ENCODE measurements at regions of chr21 and their contacts with region 1.

Region 1: DNA sequence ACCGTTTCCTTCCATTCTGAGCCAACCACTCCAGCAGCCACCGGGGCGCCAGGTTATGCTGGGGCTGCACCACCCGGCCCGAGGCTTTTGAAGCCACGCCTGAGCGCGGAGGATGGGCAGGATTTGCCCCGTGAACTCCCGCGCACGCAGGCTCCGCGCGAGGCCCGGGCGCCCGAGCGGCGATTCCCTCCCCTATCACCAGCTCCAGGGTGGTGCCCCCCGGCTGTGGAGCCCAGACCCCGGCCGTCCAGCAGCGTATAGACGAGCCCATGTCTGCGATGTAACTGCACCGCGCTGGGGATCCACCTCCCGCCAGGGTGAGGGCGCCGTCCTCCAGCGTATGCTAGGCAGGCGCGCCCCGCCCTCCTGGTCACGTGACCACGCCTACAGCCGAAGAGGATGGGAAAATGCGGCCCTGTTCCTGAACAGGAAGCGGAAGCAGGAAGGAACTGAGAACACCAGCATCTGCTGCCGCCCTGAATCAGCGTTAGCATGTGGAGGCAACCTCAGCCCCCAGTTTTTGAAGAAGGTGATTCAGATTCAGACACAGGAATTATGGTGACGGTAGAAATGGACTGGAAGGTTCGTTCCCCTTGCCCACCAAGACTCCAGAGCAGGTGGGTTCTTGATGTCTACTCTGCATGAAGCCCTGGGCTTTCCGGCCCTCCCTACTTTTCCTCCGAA is 46.0 kb downstream of the VPS26C start:
- DNase-seq: peak; percentile 89 to 96 (median 94)
- H3K4me3 ChIP-seq: peak overlapping the region; percentile 55 to 82 (median 67)
- H3K4me3 Mint-ChIP-seq: peak overlapping the region; percentile 90 to 93
- H3K27ac ChIP-seq: peak overlapping the region; percentile 21 to 55
- H3K27ac Mint-ChIP-seq: peak overlapping the region; percentile 32 to 87 (median 78)
- H3K4me1 ChIP-seq: peaks cover 14 to 24% of the 10 kb centered on the region in 2 donors
- H3K4me1 Mint-ChIP-seq: peaks cover 23% of the 10 kb centered on the region
- H3K27me3 ChIP-seq: no peaks in the 10 kb centered on the region
- H3K27me3 Mint-ChIP-seq: peaks cover 2 to 10% (median 9%) of the 10 kb centered on the region in 3 donors
- CTCF ChIP-seq: peak; percentile 67

Region 2: GRCh38 chr21:37145635-37146111 is 75.5 kb before region 1 on chr21:
- intact Hi-C with region 1: no loop called
- DNase-seq: no peak
- H3K4me3 ChIP-seq: no peak overlapping the region
- H3K4me3 Mint-ChIP-seq: no peak overlapping the region
- H3K27ac ChIP-seq: no peak overlapping the region
- H3K27ac Mint-ChIP-seq: peak overlapping the region in 2 of 7 donors; percentile 21 to 68
- H3K4me1 ChIP-seq: no peaks in the 10 kb centered on the region
- H3K4me1 Mint-ChIP-seq: no peaks in the 10 kb centered on the region
- H3K27me3 ChIP-seq: no peaks in the 10 kb centered on the region
- H3K27me3 Mint-ChIP-seq: no peaks in the 10 kb centered on the region
- CTCF ChIP-seq: no peak

Region 3: DNA sequence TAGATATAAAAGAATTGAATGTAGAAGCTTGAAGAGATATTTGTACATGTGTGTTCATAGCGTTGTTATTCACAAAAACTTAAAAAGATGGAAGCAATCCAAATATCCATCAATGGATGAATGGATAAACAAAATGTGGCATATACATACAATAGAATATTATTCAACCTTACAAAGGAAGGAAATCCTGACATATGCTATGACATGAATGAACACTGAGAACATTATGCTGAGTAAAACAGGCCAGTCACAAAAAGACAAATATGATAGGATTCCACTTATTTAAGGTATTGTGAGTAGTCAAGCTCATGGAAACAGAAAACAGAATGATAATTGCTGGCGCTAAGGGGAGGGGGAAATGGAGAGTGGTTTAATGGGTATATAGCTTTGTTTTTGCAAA is 98.4 kb after region 1 on chr21:
- intact Hi-C with region 1: no loop called
- DNase-seq: no peak
- H3K4me3 ChIP-seq: no peak overlapping the region
- H3K4me3 Mint-ChIP-seq: no peak overlapping the region
- H3K27ac ChIP-seq: no peak overlapping the region
- H3K27ac Mint-ChIP-seq: no peak overlapping the region
- H3K4me1 ChIP-seq: no peaks in the 10 kb centered on the region
- H3K4me1 Mint-ChIP-seq: no peaks in the 10 kb centered on the region
- H3K27me3 ChIP-seq: no peaks in the 10 kb centered on the region
- H3K27me3 Mint-ChIP-seq: peaks cover 0 to 2% (median 1%) of the 10 kb centered on the region in 3 donors
- CTCF ChIP-seq: no peak

Region 4: GRCh38 chr21:37415939-37416338 is 194.8 kb after region 1 on chr21:
- intact Hi-C with region 1: no loop called
- DNase-seq: no peak
- H3K4me3 ChIP-seq: no peak overlapping the region
- H3K4me3 Mint-ChIP-seq: no peak overlapping the region
- H3K27ac ChIP-seq: peak overlapping the region in 1 of 2 donors; percentile 64
- H3K27ac Mint-ChIP-seq: peak overlapping the region in 3 of 7 donors; percentile 4 to 58 (median 7)
- H3K4me1 ChIP-seq: peaks cover 16 to 36% of the 10 kb centered on the region in 2 donors
- H3K4me1 Mint-ChIP-seq: peaks cover 56% of the 10 kb centered on the region
- H3K27me3 ChIP-seq: no peaks in the 10 kb centered on the region
- H3K27me3 Mint-ChIP-seq: peaks cover 0 to 1% (median 0%) of the 10 kb centered on the region in 3 donors
- CTCF ChIP-seq: no peak

Region 5: DNA sequence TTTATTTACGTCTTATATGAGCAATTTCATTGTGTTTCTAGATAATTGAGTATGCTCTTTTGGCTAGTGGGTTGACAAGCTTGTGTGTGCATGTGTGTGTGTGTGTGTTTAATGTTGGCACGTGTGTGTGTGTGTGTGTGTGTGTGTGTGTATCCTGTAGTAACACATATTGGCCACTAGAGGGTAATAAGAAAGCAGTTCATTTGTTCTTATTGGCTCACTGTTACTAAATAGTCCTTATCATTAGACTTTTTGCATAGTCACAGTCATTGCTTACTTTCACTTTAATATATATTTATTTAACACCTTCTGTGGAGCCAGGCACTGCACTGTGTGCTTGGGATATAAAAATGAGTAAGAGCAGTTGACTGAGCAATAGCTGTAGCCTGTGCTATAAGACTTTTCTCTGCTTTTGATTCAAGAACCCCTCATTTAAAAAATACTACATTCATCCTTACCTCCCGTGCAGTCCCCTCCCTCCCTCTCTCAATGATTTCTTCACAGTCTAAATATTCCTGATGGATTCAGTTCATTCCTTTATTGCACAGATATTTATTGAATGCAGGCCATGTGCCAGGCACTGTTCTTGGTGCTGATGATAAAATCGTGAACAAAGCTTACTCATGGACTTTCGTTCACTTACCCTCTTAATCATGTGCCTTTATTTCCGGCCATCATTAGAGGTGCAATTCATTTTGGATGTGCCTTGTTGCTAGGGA is 242.1 kb after region 1 on chr21:
- intact Hi-C with region 1: loop called in 1 of 2 experiments (anchors 5 kb)
- DNase-seq: peak; percentile 54 to 56 (median 55)
- H3K4me3 ChIP-seq: peak overlapping the region in 1 of 3 experiments; percentile 43
- H3K4me3 Mint-ChIP-seq: peak overlapping the region in 1 of 2 donors; percentile 56
- H3K27ac ChIP-seq: peak overlapping the region in 1 of 2 donors; percentile 73
- H3K27ac Mint-ChIP-seq: peak overlapping the region; percentile 6 to 84 (median 76)
- H3K4me1 ChIP-seq: peaks cover 6 to 10% of the 10 kb centered on the region in 2 donors
- H3K4me1 Mint-ChIP-seq: peaks cover 37% of the 10 kb centered on the region
- H3K27me3 ChIP-seq: no peaks in the 10 kb centered on the region
- H3K27me3 Mint-ChIP-seq: peaks cover 0 to 2% (median 0%) of the 10 kb centered on the region in 3 donors
- CTCF ChIP-seq: peak; percentile 56

Region 6: DNA sequence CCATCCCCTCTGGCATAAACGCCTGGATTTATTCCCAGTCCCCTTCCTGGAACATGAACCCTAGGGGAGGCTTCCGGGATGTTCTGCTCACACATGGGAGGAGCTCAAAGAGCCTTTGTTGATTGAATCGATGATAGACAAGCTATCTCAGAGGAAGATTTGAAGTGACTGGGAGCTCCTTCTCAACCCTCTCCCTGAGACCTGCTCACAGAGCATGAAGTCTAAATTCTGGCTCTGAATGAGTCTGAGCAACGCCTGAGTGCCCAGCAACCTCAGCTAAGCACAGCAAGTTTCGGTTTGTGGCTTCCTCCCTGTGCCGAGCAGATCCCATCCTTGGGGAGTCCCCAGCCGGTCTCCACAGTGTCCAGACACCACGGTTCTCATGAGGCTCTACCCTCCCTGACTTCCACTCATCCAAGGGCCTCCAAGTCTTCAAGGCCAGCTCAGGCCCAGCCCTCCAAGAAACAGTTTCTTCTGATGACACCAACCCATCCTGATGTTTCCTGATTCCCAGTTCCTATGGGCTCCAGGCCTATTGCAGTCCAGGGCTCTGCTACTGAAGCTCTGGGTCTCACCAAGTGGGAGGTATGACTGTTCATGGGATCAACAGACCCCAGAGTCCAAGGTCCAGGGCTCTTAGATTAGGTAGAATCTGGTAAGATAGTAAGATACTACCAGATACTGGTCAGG is 336.3 kb after region 1 on chr21:
- intact Hi-C with region 1: loop called in 1 of 2 experiments (anchors 10 kb)
- DNase-seq: no peak
- H3K4me3 ChIP-seq: no peak overlapping the region
- H3K4me3 Mint-ChIP-seq: no peak overlapping the region
- H3K27ac ChIP-seq: no peak overlapping the region
- H3K27ac Mint-ChIP-seq: peak overlapping the region in 1 of 7 donors; percentile 15
- H3K4me1 ChIP-seq: no peaks in the 10 kb centered on the region
- H3K4me1 Mint-ChIP-seq: no peaks in the 10 kb centered on the region
- H3K27me3 ChIP-seq: no peaks in the 10 kb centered on the region
- H3K27me3 Mint-ChIP-seq: peaks cover 0 to 2% (median 2%) of the 10 kb centered on the region in 3 donors
- CTCF ChIP-seq: no peak

Measured in CD14-positive monocyte (primary cell).